ENCODE measurements at regions of chrX and their contacts with region 1.

Region 1: GRCh38 chrX:45769761-45770582 is 569.3 kb upstream of the DIPK2B start:
- DNase-seq: peak; percentile 86
- H3K4me3 ChIP-seq: peak overlapping the region; percentile 59 to 98 (median 91)
- H3K27ac ChIP-seq: peak overlapping the region; percentile 98
- H3K4me1 ChIP-seq: peaks cover 41% of the 10 kb centered on the region
- H3K27me3 ChIP-seq: no peaks in the 10 kb centered on the region
- CTCF ChIP-seq: no peak

Region 2: DNA sequence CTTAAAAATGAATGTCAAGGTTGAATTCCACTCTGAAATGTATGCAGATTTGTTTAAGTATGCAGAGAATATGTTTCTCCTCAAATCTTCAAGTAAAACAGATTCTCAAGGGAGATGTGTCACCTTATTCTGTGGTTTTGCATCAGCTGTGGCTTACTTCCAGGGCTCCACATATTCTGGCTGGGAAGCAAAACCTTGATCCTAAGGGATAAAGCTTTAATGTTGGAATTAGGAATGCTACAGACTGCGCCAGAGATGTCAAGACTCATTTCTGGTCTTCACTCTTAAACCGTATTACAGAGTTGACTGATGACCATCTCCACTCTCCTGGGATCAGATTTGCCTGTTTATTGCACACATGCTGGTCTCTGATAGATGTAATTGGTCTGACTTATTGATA is 425.4 kb before region 1 on chrX:
- CTCF ChIA-PET with region 1: no interaction called
- dilution Hi-C with region 1: no loop called
- in situ Hi-C with region 1: loop called in 1 of 2 experiments (anchors 25 kb)
- intact Hi-C with region 1: no loop called
- DNase-seq: no peak
- H3K4me3 ChIP-seq: no peak overlapping the region
- H3K27ac ChIP-seq: no peak overlapping the region
- H3K4me1 ChIP-seq: peaks cover 4% of the 10 kb centered on the region
- H3K27me3 ChIP-seq: no peaks in the 10 kb centered on the region
- CTCF ChIP-seq: no peak

Region 3: DNA sequence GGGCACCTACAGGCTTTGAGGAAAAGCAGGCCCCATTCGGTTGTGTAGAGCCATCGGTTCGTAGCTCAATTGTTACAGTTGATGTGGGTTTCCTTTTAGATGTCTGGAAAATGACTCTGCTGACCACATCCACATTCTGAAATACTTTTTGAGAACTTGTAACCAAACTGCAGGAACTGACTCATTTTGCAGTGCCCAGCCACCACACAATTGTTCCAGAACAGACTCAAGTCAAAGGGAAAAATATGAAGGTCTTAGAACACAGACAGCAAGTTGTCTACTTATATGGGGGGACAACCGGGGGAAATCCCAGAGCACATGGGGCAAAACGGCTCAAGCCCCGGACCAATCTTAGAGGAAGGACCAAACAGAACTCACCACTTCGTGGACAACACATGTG is 11.7 kb before region 1 on chrX:
- CTCF ChIA-PET with region 1: no interaction called
- dilution Hi-C with region 1: no loop called
- in situ Hi-C with region 1: no loop called
- intact Hi-C with region 1: loop called (anchors 1 kb)
- DNase-seq: peak; percentile 89
- H3K4me3 ChIP-seq: no peak overlapping the region
- H3K27ac ChIP-seq: peak overlapping the region; percentile 86
- H3K4me1 ChIP-seq: peaks cover 94% of the 10 kb centered on the region
- H3K27me3 ChIP-seq: no peaks in the 10 kb centered on the region
- CTCF ChIP-seq: no peak

Region 4: DNA sequence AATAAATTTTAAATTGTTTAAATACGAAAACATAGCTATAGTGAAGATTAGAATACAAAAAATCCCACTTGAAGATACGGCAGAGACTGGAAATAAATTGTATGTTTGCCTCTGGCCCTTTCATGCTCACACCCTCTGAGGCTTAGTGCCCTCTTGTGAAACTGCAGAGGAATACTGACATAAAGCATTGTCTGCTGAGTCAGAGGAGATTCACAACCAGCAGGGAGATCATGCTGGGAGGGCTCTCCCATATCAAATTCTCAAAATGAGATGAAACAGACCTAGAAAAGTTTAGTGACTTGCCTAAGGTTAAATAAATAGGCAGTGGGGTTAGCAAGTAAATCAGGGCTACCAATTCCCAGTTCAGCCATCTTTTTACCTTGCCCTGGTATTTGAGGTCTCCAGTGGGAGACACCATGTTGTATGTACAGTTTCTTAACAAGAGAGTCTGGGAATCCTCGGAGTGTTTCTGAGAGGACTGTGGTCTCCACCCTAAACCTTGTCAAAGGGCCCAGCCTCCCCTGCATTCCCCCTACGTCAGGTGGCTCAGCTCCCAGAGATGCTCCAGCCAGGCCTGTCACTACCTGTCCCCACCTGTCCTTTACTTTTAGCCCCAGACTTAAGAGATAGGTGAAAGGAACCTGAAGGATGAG is 12.1 kb after region 1 on chrX:
- CTCF ChIA-PET with region 1: interaction called, 12 read pairs
- dilution Hi-C with region 1: no loop called
- in situ Hi-C with region 1: no loop called
- intact Hi-C with region 1: no loop called
- DNase-seq: peak; percentile 79
- H3K4me3 ChIP-seq: no peak overlapping the region
- H3K27ac ChIP-seq: peak overlapping the region; percentile 69
- H3K4me1 ChIP-seq: peaks cover 76% of the 10 kb centered on the region
- H3K27me3 ChIP-seq: no peaks in the 10 kb centered on the region
- CTCF ChIP-seq: peak; percentile 25 to 54

Region 5: GRCh38 chrX:45788941-45789348 is 19.0 kb after region 1 on chrX:
- CTCF ChIA-PET with region 1: interaction called, 12 read pairs
- dilution Hi-C with region 1: no loop called
- in situ Hi-C with region 1: no loop called
- intact Hi-C with region 1: loop called (anchors 1 kb)
- DNase-seq: peak; percentile 45
- H3K4me3 ChIP-seq: no peak overlapping the region
- H3K27ac ChIP-seq: peak overlapping the region; percentile 74
- H3K4me1 ChIP-seq: peaks cover 55% of the 10 kb centered on the region
- H3K27me3 ChIP-seq: no peaks in the 10 kb centered on the region
- CTCF ChIP-seq: no peak

Region 6: DNA sequence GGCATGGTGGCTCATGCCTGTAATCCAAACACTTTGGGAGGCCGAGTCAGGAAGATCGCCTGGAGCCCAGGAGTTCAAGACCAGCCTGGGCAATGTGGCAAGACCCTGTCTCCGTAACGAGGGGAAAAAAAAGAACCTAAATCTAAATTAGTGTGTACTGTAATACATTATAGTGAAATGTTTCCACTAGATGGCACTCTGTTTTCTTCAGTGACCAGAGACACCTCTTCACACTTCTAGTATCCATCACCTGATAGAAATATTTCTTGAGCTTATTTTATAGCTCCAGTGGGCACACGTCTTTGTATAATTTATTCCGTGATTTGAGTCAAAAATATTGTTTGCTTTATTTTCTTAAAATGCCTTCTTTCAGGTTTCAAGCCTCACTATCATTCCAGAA is 31.6 kb after region 1 on chrX:
- CTCF ChIA-PET with region 1: interaction called, 8 read pairs
- dilution Hi-C with region 1: no loop called
- in situ Hi-C with region 1: no loop called
- intact Hi-C with region 1: loop called (anchors 1 kb)
- DNase-seq: peak; percentile 50
- H3K4me3 ChIP-seq: peak overlapping the region in 1 of 3 experiments; percentile 40
- H3K27ac ChIP-seq: peak overlapping the region; percentile 91
- H3K4me1 ChIP-seq: peaks cover 48% of the 10 kb centered on the region
- H3K27me3 ChIP-seq: no peaks in the 10 kb centered on the region
- CTCF ChIP-seq: peak; percentile 39 to 52

Region 7: GRCh38 chrX:45952030-45952429 is 182.1 kb after region 1 on chrX:
- CTCF ChIA-PET with region 1: no interaction called
- dilution Hi-C with region 1: no loop called
- in situ Hi-C with region 1: no loop called
- intact Hi-C with region 1: no loop called
- DNase-seq: peak; percentile 59
- H3K4me3 ChIP-seq: no peak overlapping the region
- H3K27ac ChIP-seq: no peak overlapping the region
- H3K4me1 ChIP-seq: no peaks in the 10 kb centered on the region
- H3K27me3 ChIP-seq: no peaks in the 10 kb centered on the region
- CTCF ChIP-seq: peak in 1 of 2 donors; percentile 27

Region 8: GRCh38 chrX:46376246-46376885 is 606.4 kb after region 1 on chrX:
- CTCF ChIA-PET with region 1: no interaction called
- dilution Hi-C with region 1: no loop called
- in situ Hi-C with region 1: no loop called
- intact Hi-C with region 1: loop called (anchors 1 kb)
- DNase-seq: peak; percentile 61
- H3K4me3 ChIP-seq: no peak overlapping the region
- H3K27ac ChIP-seq: peak overlapping the region; percentile 7
- H3K4me1 ChIP-seq: peaks cover 20% of the 10 kb centered on the region
- H3K27me3 ChIP-seq: no peaks in the 10 kb centered on the region
- CTCF ChIP-seq: peak; percentile 50 to 61

Measured in mammary epithelial cell (primary cell).